GM12878 (cell line): ENCODE measurements at regions of chr2 and their contacts with region 1.

Region 1: GRCh38 chr2:174634130-174635014 is 36.8 kb upstream of the WIPF1 start:
- DNase-seq: peak; percentile 65
- ATAC-seq: peak; percentile 85
- H3K4me3 ChIP-seq: peak overlapping the region; percentile 84
- H3K27ac ChIP-seq: peak overlapping the region; percentile 91
- H3K4me1 ChIP-seq: peaks cover 22% of the 10 kb centered on the region
- H3K27me3 ChIP-seq: no peaks in the 10 kb centered on the region
- CTCF ChIP-seq: peak; percentile 35 to 47 (median 45); a peak in 5 of 6 replicates
- EP300 ChIP-seq: no peak
- POLR2A ChIP-seq: peak; percentile 60
- RAD21 ChIP-seq: no peak

Region 2: GRCh38 chr2:174577967-174578589 is 56.3 kb before region 1 on chr2:
- CTCF ChIA-PET with region 1: interaction called, 12 read pairs
- POLR2A ChIA-PET with region 1: no interaction called
- RAD21 ChIA-PET with region 1: interaction called, 6 read pairs
- SMC1A ChIA-PET with region 1: interaction called, 4 read pairs
- in situ Hi-C with region 1: no loop called
- intact Hi-C with region 1: no loop called
- DNase-seq: no peak
- ATAC-seq: peak; percentile 71
- H3K4me3 ChIP-seq: no peak overlapping the region
- H3K27ac ChIP-seq: no peak overlapping the region
- H3K4me1 ChIP-seq: peaks cover 7% of the 10 kb centered on the region
- H3K27me3 ChIP-seq: no peaks in the 10 kb centered on the region
- CTCF ChIP-seq: peak; percentile 60 to 77 (median 64); a peak in 5 of 6 replicates
- EP300 ChIP-seq: no peak
- POLR2A ChIP-seq: no peak
- RAD21 ChIP-seq: peak; percentile 88

Region 3: DNA sequence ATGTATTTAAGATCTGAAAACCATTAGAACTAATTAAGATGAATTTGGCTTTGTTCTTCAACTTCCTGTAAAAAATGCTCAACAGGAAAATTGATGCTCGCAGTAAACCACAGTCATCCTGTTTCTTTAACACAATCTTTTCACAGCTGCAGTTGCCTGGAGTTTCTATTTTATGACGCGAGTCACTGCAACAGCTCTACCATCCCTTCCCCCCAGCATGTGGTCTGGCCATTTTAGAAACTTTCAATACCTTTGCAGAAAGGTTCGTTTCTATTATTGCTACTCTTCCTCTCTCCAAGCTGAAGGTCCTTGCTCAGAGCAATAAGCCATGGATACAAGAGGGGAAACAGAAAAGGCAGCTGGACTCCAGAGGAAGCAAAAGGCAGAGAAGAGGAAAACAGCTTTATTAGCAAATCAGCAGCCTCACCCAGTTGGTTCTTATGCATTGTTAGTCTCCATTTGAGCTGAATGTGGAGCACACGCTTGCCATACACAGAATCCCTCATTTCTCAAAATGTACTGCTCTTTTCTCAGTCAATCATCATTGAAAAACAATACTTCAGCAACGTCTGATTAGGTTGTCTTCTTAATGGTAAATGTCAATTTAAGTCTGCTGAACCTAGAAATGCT is 40.7 kb before region 1 on chr2:
- CTCF ChIA-PET with region 1: interaction called, 53 read pairs
- POLR2A ChIA-PET with region 1: interaction called, 72 read pairs
- RAD21 ChIA-PET with region 1: interaction called, 71 read pairs
- SMC1A ChIA-PET with region 1: interaction called, 512 read pairs
- in situ Hi-C with region 1: no loop called
- intact Hi-C with region 1: loop called (anchors 2 kb)
- DNase-seq: peak; percentile 90
- ATAC-seq: peak; percentile 65
- H3K4me3 ChIP-seq: peak overlapping the region; percentile 58
- H3K27ac ChIP-seq: peak overlapping the region; percentile 95
- H3K4me1 ChIP-seq: peaks cover 20% of the 10 kb centered on the region
- H3K27me3 ChIP-seq: no peaks in the 10 kb centered on the region
- CTCF ChIP-seq: no peak
- EP300 ChIP-seq: peak; percentile 88 to 96
- POLR2A ChIP-seq: peak; percentile 53
- RAD21 ChIP-seq: no peak

Region 4: DNA sequence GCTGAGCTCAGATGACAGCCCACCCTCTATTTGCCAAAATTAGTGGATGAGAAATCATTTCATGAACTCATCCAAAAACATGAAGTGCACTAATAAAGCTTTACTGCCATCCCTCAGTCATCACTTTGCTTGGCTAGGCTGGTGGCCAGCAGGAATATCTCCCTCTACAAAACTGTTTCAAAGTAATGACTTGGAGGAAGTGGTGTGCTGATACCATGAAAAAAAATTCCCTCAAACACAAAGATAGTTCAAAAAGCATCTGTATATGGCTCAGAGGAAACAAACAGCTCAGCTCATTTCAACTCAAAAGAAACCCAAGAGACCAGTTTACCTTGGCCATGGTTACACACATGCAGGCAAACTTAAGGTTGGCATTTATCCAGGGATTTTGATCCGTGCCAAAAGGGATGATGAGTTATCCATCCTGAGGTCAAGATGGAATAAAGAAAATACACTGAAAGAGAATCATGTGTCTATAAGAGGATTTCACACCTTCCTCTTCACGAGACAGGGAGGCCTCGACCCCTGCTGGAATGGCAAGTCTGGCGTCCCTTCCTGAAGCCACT is 18.4 kb before region 1 on chr2:
- CTCF ChIA-PET with region 1: interaction called, 50 read pairs
- POLR2A ChIA-PET with region 1: interaction called, 60 read pairs
- RAD21 ChIA-PET with region 1: interaction called, 137 read pairs
- SMC1A ChIA-PET with region 1: interaction called, 512 read pairs
- in situ Hi-C with region 1: no loop called
- intact Hi-C with region 1: no loop called
- DNase-seq: no peak
- ATAC-seq: peak; percentile 57
- H3K4me3 ChIP-seq: no peak overlapping the region
- H3K27ac ChIP-seq: no peak overlapping the region
- H3K4me1 ChIP-seq: peaks cover 41% of the 10 kb centered on the region
- H3K27me3 ChIP-seq: no peaks in the 10 kb centered on the region
- CTCF ChIP-seq: no peak
- EP300 ChIP-seq: no peak
- POLR2A ChIP-seq: no peak
- RAD21 ChIP-seq: no peak

Region 5: DNA sequence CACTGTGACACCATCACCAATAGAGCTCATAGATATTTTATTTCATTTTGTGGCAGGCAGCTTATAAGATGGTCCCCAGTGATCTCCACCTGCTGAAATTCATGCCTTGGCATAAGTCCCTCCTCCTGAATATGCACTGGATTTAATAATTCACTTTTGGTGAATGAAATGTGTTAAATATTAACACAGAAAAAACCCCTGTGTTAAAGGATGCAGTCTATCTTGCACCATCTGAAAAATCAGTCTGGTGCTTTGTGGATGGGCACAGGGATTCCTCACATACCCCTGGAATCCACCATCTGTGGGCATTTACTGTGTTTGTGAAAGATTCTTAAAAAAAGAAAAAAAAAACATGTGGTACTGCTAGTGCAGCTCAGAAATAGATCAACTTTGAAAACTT is 10.7 kb before region 1 on chr2:
- CTCF ChIA-PET with region 1: interaction called, 13 read pairs
- POLR2A ChIA-PET with region 1: interaction called, 27 read pairs
- RAD21 ChIA-PET with region 1: interaction called, 9 read pairs
- SMC1A ChIA-PET with region 1: interaction called, 512 read pairs
- in situ Hi-C with region 1: no loop called
- intact Hi-C with region 1: no loop called
- DNase-seq: no peak
- ATAC-seq: peak; percentile 61
- H3K4me3 ChIP-seq: no peak overlapping the region
- H3K27ac ChIP-seq: no peak overlapping the region
- H3K4me1 ChIP-seq: no peaks in the 10 kb centered on the region; the same call in 1 of the 2 replicates
- H3K27me3 ChIP-seq: no peaks in the 10 kb centered on the region
- CTCF ChIP-seq: no peak
- EP300 ChIP-seq: no peak
- POLR2A ChIP-seq: no peak
- RAD21 ChIP-seq: no peak

Region 6: GRCh38 chr2:174654419-174654941 is 20.1 kb after region 1 on chr2:
- CTCF ChIA-PET with region 1: interaction called, 3 read pairs
- POLR2A ChIA-PET with region 1: interaction called, 5 read pairs
- RAD21 ChIA-PET with region 1: interaction called, 6 read pairs
- SMC1A ChIA-PET with region 1: interaction called, 10 read pairs
- in situ Hi-C with region 1: no loop called
- intact Hi-C with region 1: no loop called
- DNase-seq: no peak
- ATAC-seq: no peak
- H3K4me3 ChIP-seq: no peak overlapping the region
- H3K27ac ChIP-seq: no peak overlapping the region
- H3K4me1 ChIP-seq: no peaks in the 10 kb centered on the region
- H3K27me3 ChIP-seq: no peaks in the 10 kb centered on the region
- CTCF ChIP-seq: no peak
- EP300 ChIP-seq: no peak
- POLR2A ChIP-seq: no peak
- RAD21 ChIP-seq: no peak

Region 7: GRCh38 chr2:174682578-174683391 is 48.4 kb after region 1 on chr2:
- CTCF ChIA-PET with region 1: interaction called, 76 read pairs
- POLR2A ChIA-PET with region 1: interaction called, 15 read pairs
- RAD21 ChIA-PET with region 1: interaction called, 42 read pairs
- SMC1A ChIA-PET with region 1: interaction called, 44 read pairs
- in situ Hi-C with region 1: no loop called
- intact Hi-C with region 1: loop called (anchors 2 kb)
- DNase-seq: no peak
- ATAC-seq: peak; percentile 66
- H3K4me3 ChIP-seq: peak overlapping the region; percentile 79
- H3K27ac ChIP-seq: no peak overlapping the region
- H3K4me1 ChIP-seq: peaks cover 4% of the 10 kb centered on the region; the same call in 1 of the 2 replicates
- H3K27me3 ChIP-seq: peaks cover 0 to 2% of the 10 kb centered on the region in 2 experiments; a peak in 2 of 4 replicates
- CTCF ChIP-seq: no peak
- EP300 ChIP-seq: no peak
- POLR2A ChIP-seq: no peak
- RAD21 ChIP-seq: no peak